Prostate gland (tissue), 2 donors: ENCODE measurements at regions of chr16 and their contacts with region 1.

Region 1: GRCh38 chr16:18024611-18025010 is 311.9 kb downstream of the NPIPA8 start:
- DNase-seq: no peak
- H3K4me3 ChIP-seq: no peak overlapping the region
- H3K27ac ChIP-seq: no peak overlapping the region
- H3K4me1 ChIP-seq: no peaks in the 10 kb centered on the region
- H3K27me3 ChIP-seq: no peaks in the 10 kb centered on the region
- CTCF ChIP-seq: no peak
- POLR2A ChIP-seq: no peak

Region 2: GRCh38 chr16:17977260-17977659 is 47.4 kb before region 1 on chr16:
- intact Hi-C with region 1: loop called (anchors 5 kb)
- DNase-seq: no peak
- H3K4me3 ChIP-seq: no peak overlapping the region
- H3K27ac ChIP-seq: no peak overlapping the region
- H3K4me1 ChIP-seq: peaks cover 7% of the 10 kb centered on the region
- H3K27me3 ChIP-seq: no peaks in the 10 kb centered on the region
- CTCF ChIP-seq: no peak
- POLR2A ChIP-seq: no peak